Adrenal gland (tissue), 19 donors: ENCODE measurements at regions of chr16 and their contacts with region 1.

Region 1: GRCh38 chr16:2500918-2501750 is 12.6 kb upstream of the ATP6V0C start:
- DNase-seq: peak; percentile 80 to 94 (median 87)
- H3K4me3 ChIP-seq: peak overlapping the region in 1 of 4 donors; percentile 24
- H3K27ac ChIP-seq: peak overlapping the region in 3 of 5 donors; percentile 17 to 37 (median 22)
- H3K4me1 ChIP-seq: peaks cover 0 to 35% of the 10 kb centered on the region in 2 donors
- H3K27me3 ChIP-seq: no peaks in the 10 kb centered on the region
- CTCF ChIP-seq: peak; percentile 96 to 99 (median 98)
- POLR2A ChIP-seq: no peak

Region 2: GRCh38 chr16:2296661-2297505 is 204.3 kb before region 1 on chr16:
- intact Hi-C with region 1: loop called in 1 of 2 experiments (anchors 10 kb)
- DNase-seq: peak; percentile 76 to 96 (median 92)
- H3K4me3 ChIP-seq: no peak overlapping the region
- H3K27ac ChIP-seq: peak overlapping the region in 4 of 5 donors; percentile 57 to 91 (median 66)
- H3K4me1 ChIP-seq: peaks cover 0 to 5% of the 10 kb centered on the region in 2 donors
- H3K27me3 ChIP-seq: no peaks in the 10 kb centered on the region
- CTCF ChIP-seq: peak; percentile 49 to 81 (median 72)
- POLR2A ChIP-seq: no peak

Region 3: GRCh38 chr16:2340564-2341455 is 160.3 kb before region 1 on chr16 and contains the start of gene ABCA3:
- intact Hi-C with region 1: loop called (anchors 5 to 10 kb)
- DNase-seq: peak; percentile 89 to 98 (median 95)
- H3K4me3 ChIP-seq: peak within 1 kb of the TSS in 3 of 4 donors; percentile 38 to 88 (median 45)
- H3K27ac ChIP-seq: peak within 1 kb of the TSS in 3 of 5 donors; percentile 10 to 74 (median 57)
- H3K4me1 ChIP-seq: peaks cover 5 to 9% of the 10 kb centered on the region in 2 donors
- H3K27me3 ChIP-seq: no peaks in the 10 kb centered on the region
- CTCF ChIP-seq: peak; percentile 94 to 100 (median 100)
- POLR2A ChIP-seq: peak; percentile 28 to 46
- total RNA-seq, gene ABCA3: 3.3 to 30.8 (median 23.4) TPM

Region 4: GRCh38 chr16:2429034-2429770 is 71.9 kb before region 1 on chr16 and contains the start of gene CCNF:
- intact Hi-C with region 1: loop called in 1 of 2 experiments (anchors 10 kb)
- DNase-seq: peak; percentile 95 to 98 (median 97)
- H3K4me3 ChIP-seq: peak within 1 kb of the TSS; percentile 35 to 90 (median 64)
- H3K27ac ChIP-seq: peak within 1 kb of the TSS in 3 of 5 donors; percentile 55 to 76 (median 70)
- H3K4me1 ChIP-seq: peaks cover 0 to 10% of the 10 kb centered on the region in 2 donors
- H3K27me3 ChIP-seq: no peaks in the 10 kb centered on the region
- CTCF ChIP-seq: peak in 2 of 6 experiments; percentile 44 to 49
- POLR2A ChIP-seq: peak in 1 of 2 donors; percentile 40
- total RNA-seq, gene CCNF: 1.6 to 5.4 (median 2.5) TPM

Region 5: GRCh38 chr16:2447920-2448583 is 53.1 kb before region 1 on chr16:
- intact Hi-C with region 1: loop called in 1 of 2 experiments (anchors 5 kb)
- DNase-seq: peak in 5 of 7 donors; percentile 61 to 69 (median 67)
- H3K4me3 ChIP-seq: no peak overlapping the region
- H3K27ac ChIP-seq: peak overlapping the region in 2 of 5 donors; percentile 34 to 35
- H3K4me1 ChIP-seq: peaks cover 0 to 14% of the 10 kb centered on the region in 2 donors
- H3K27me3 ChIP-seq: no peaks in the 10 kb centered on the region
- CTCF ChIP-seq: no peak
- POLR2A ChIP-seq: no peak